Activated CD8-positive, alpha-beta T cell treated with anti-CD3 and anti-CD28 coated beads, Interleukin-2, amount 10 ng/mL, durations not matched to agents 7 days and 5 days (primary cell): ENCODE measurements at regions of chr5 and their contacts with region 1.

Region 1: DNA sequence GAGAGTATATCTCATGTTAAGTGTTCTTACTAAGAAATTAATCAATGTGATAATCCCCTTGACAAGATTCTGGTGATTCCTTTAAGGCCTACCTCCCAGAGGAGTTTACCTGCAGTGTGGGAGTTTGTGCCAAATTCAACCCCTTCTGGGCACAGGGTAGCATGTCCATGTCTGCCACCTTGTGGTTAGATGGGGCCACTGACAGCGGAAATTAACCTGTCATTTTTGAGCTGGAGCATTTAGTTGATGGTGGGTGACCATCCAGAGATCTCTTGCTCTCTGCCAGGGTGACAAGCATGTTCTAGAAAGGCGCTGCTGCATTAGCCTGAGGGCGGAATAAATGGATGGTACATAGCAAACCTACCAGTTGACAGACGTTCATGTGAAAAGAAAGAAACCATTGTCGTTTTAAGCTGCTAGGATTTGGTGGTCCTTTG is 132.2 kb downstream of the FBXO4 start:
- DNase-seq: peak; percentile 64
- ATAC-seq: peak; percentile 74
- H3K4me3 Mint-ChIP-seq: no peak overlapping the region
- H3K27ac Mint-ChIP-seq: no peak overlapping the region
- H3K4me1 Mint-ChIP-seq: peaks cover 3% of the 10 kb centered on the region
- H3K27me3 Mint-ChIP-seq: peaks cover 7% of the 10 kb centered on the region

Region 2: DNA sequence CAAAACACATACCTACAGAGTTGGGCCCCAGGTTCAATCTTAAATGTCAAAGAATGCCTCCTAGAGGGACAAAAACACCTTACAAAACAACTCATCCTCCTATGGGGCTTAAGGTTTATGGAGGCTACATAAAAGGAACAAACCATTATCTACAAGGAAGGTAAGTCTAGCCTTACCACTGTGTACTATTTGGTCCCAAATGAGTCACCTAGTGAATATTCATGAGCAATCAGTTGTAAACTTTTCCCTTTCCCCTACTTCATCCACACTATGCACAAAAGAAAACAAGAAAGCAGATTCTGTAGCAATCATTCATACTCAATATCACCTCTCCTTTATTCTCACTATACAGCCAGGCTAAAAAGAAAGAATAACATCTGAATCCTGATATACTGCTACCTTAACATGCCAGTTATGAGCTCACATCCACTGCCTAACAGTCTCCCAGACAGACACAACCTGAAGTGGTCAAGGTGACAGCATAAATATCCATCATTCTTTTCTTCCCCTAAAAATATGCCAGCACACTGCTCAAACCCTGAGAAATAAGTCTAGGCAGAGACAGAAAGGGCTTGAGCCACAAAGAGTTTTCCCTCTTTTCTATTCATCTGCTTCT is 193.3 kb before region 1 on chr5:
- CTCF ChIA-PET with region 1: interaction called, 150 read pairs
- POLR2A ChIA-PET with region 1: no interaction called
- DNase-seq: no peak
- ATAC-seq: no peak
- H3K4me3 Mint-ChIP-seq: no peak overlapping the region
- H3K27ac Mint-ChIP-seq: peak overlapping the region; percentile 2
- H3K4me1 Mint-ChIP-seq: peaks cover 55% of the 10 kb centered on the region
- H3K27me3 Mint-ChIP-seq: no peaks in the 10 kb centered on the region

Region 3: DNA sequence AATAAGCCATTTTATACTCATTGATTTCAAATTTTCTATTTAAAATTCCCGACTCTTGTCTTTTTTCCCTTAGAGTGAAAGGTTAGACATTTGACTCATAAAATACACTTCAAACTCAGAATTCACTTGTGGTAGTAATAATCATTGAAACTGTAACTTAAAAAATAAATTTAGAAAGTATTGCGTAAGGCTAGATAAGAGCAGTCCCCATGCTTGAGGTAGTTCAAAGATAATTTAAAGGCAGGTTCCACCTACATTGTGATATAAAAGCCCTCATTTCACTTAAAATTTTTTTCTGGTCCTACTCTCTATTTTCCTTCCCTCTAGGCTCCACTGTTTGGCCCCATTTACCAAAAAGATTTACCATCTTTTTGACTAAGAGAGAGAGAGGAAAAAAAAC is 71.3 kb before region 1 on chr5:
- CTCF ChIA-PET with region 1: interaction called, 10 read pairs
- POLR2A ChIA-PET with region 1: no interaction called
- DNase-seq: no peak
- ATAC-seq: no peak
- H3K4me3 Mint-ChIP-seq: no peak overlapping the region
- H3K27ac Mint-ChIP-seq: no peak overlapping the region
- H3K4me1 Mint-ChIP-seq: no peaks in the 10 kb centered on the region
- H3K27me3 Mint-ChIP-seq: peaks cover 17% of the 10 kb centered on the region

Region 4: GRCh38 chr5:42043400-42043799 is 13.9 kb before region 1 on chr5:
- CTCF ChIA-PET with region 1: interaction called, 25 read pairs
- POLR2A ChIA-PET with region 1: no interaction called
- DNase-seq: no peak
- ATAC-seq: no peak
- H3K4me3 Mint-ChIP-seq: no peak overlapping the region
- H3K27ac Mint-ChIP-seq: no peak overlapping the region
- H3K4me1 Mint-ChIP-seq: no peaks in the 10 kb centered on the region
- H3K27me3 Mint-ChIP-seq: peaks cover 20% of the 10 kb centered on the region